GM12878 (cell line): ENCODE measurements at regions of chr2 and their contacts with region 1.

Region 1: DNA sequence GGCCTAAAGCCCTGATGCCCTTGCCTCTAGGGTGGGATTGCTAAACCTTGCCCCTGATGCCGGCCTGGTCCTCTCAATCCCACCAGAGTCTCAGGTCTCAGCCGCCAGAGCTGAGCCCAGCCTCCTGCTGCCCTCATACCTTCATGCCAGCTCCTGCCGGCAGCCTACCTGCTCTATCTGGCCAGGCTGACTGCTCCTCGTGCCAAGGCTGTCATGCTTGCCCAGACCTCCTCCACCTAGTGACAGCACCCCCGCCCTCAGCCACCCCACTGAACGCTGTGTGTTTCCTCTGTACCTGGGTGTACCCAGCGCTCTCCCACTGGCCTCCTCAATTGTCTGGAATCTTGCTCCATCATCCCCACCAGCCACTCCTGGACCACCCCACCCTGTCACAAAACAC is 120.1 kb downstream of the CACNB4 start:
- DNase-seq: no peak
- ATAC-seq: no peak
- H3K4me3 ChIP-seq: no peak overlapping the region
- H3K27ac ChIP-seq: no peak overlapping the region
- H3K4me1 ChIP-seq: peaks cover 10% of the 10 kb centered on the region; the same call in 1 of the 2 replicates
- H3K27me3 ChIP-seq: peaks cover 0 to 4% of the 10 kb centered on the region in 2 experiments; a peak in 2 of 4 replicates
- CTCF ChIP-seq: no peak
- EP300 ChIP-seq: no peak
- POLR2A ChIP-seq: no peak
- RAD21 ChIP-seq: no peak

Region 2: GRCh38 chr2:151931030-151931618 is 47.6 kb before region 1 on chr2:
- CTCF ChIA-PET with region 1: no interaction called
- POLR2A ChIA-PET with region 1: no interaction called
- RAD21 ChIA-PET with region 1: no interaction called
- SMC1A ChIA-PET with region 1: no interaction called
- in situ Hi-C with region 1: no loop called
- intact Hi-C with region 1: loop called (anchors 1 kb)
- DNase-seq: no peak
- ATAC-seq: no peak
- H3K4me3 ChIP-seq: no peak overlapping the region
- H3K27ac ChIP-seq: no peak overlapping the region
- H3K4me1 ChIP-seq: no peaks in the 10 kb centered on the region
- H3K27me3 ChIP-seq: no peaks in the 10 kb centered on the region
- CTCF ChIP-seq: no peak
- EP300 ChIP-seq: no peak
- POLR2A ChIP-seq: no peak
- RAD21 ChIP-seq: no peak